Heart left ventricle (tissue), 16 donors: ENCODE measurements at regions of chr7 and their contacts with region 1.

Region 1: GRCh38 chr7:27150568-27151340 is 1.6 kb downstream of the HOXA3 start:
- DNase-seq: peak; percentile 52 to 80 (median 64)
- ATAC-seq: peak; percentile 55 to 85 (median 71)
- H3K4me3 ChIP-seq: peak overlapping the region in 11 of 12 donors; percentile 1 to 39 (median 33)
- H3K27ac ChIP-seq: peak overlapping the region in 1 of 12 donors; percentile 92
- H3K4me1 ChIP-seq: peaks cover 3 to 59% (median 24%) of the 10 kb centered on the region in 12 donors
- H3K27me3 ChIP-seq: peaks cover 89 to 100% (median 99%) of the 10 kb centered on the region in 9 donors
- CTCF ChIP-seq: peak; percentile 64 to 90 (median 82)
- POLR2A ChIP-seq: no peak

Region 2: DNA sequence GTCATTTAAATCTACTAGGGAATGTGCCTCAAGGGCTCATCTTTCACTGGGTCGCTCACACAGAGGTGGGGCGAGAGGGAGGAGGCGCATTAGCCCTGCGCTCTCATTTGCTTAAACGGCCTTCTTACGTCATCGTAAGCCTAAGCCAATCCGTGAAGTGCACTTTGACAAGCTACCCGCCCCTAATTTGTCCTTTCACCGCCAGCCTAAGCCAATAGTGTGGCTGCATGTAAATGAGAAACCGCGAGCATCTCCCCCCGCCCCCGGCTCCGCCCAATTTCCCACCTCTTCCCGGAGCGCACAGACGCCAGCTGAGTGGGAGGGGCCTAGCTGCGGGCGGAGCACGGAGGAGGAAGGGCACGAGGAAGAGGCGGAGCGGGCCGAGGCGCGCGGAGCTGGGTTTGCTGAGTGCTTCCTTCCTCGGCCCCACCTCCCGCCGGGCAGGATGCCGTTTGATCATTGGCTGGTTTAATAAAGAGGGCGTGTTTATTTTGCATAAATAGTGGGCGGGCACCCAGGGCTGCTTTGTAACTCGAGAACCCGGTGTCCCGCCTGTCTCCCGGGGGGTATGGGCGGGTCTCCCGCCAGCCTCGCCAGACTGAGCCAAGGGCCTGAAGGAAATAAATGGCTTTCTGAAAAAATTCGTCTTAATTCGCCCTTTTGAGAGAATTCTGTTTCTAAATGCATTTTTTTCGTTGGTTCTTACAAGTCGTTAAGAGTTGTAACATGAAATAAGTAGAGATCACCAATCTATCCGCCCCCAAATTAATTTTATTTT is 1288.3 kb before region 1 on chr7:
- intact Hi-C with region 1: loop called in 1 of 10 experiments (anchors 10 kb)
- DNase-seq: peak; percentile 80 to 92 (median 86)
- ATAC-seq: peak; percentile 83 to 96 (median 95)
- H3K4me3 ChIP-seq: peak overlapping the region in 5 of 12 donors; percentile 4 to 23 (median 7)
- H3K27ac ChIP-seq: no peak overlapping the region
- H3K4me1 ChIP-seq: peaks cover 0 to 29% (median under 1%) of the 10 kb centered on the region in 12 donors
- H3K27me3 ChIP-seq: peaks cover 78 to 100% (median 100%) of the 10 kb centered on the region in 9 donors
- CTCF ChIP-seq: no peak
- POLR2A ChIP-seq: no peak

Region 3: GRCh38 chr7:26078437-26079336 is 1072.1 kb before region 1 on chr7:
- intact Hi-C with region 1: loop called in 2 of 10 experiments (anchors 10 kb)
- DNase-seq: peak; percentile 25 to 83 (median 54)
- ATAC-seq: peak; percentile 58 to 83 (median 78)
- H3K4me3 ChIP-seq: no peak overlapping the region
- H3K27ac ChIP-seq: no peak overlapping the region
- H3K4me1 ChIP-seq: peaks cover 0 to 5% (median 0%) of the 10 kb centered on the region in 12 donors
- H3K27me3 ChIP-seq: peaks cover 4 to 85% (median 33%) of the 10 kb centered on the region in 9 donors
- CTCF ChIP-seq: peak in 10 of 12 donors; percentile 13 to 47 (median 32)
- POLR2A ChIP-seq: no peak

Region 4: GRCh38 chr7:27329911-27330310 is 179.2 kb after region 1 on chr7:
- intact Hi-C with region 1: no loop called
- DNase-seq: no peak
- ATAC-seq: no peak
- H3K4me3 ChIP-seq: no peak overlapping the region
- H3K27ac ChIP-seq: no peak overlapping the region
- H3K4me1 ChIP-seq: no peaks in the 10 kb centered on the region
- H3K27me3 ChIP-seq: no peaks in the 10 kb centered on the region
- CTCF ChIP-seq: no peak
- POLR2A ChIP-seq: no peak

Region 5: GRCh38 chr7:27346531-27347270 is 195.9 kb after region 1 on chr7:
- intact Hi-C with region 1: no loop called
- DNase-seq: peak in 1 of 5 donors; percentile 27
- ATAC-seq: no peak
- H3K4me3 ChIP-seq: no peak overlapping the region
- H3K27ac ChIP-seq: no peak overlapping the region
- H3K4me1 ChIP-seq: no peaks in the 10 kb centered on the region
- H3K27me3 ChIP-seq: peaks cover 0 to 20% (median 0%) of the 10 kb centered on the region in 9 donors
- CTCF ChIP-seq: no peak
- POLR2A ChIP-seq: no peak